ENCODE measurements at regions of chr7 and their contacts with region 1.

Region 1: GRCh38 chr7:41148521-41148951 is 554.4 kb downstream of the INHBA start:
- DNase-seq: peak; percentile 34 to 100
- H3K4me3 ChIP-seq: no peak overlapping the region; the same call in 1 of the 2 replicates
- H3K27ac ChIP-seq: peak overlapping the region; percentile 66
- H3K4me1 ChIP-seq: peaks cover 26% of the 10 kb centered on the region
- H3K27me3 ChIP-seq: no peaks in the 10 kb centered on the region
- CTCF ChIP-seq: no peak

Region 2: DNA sequence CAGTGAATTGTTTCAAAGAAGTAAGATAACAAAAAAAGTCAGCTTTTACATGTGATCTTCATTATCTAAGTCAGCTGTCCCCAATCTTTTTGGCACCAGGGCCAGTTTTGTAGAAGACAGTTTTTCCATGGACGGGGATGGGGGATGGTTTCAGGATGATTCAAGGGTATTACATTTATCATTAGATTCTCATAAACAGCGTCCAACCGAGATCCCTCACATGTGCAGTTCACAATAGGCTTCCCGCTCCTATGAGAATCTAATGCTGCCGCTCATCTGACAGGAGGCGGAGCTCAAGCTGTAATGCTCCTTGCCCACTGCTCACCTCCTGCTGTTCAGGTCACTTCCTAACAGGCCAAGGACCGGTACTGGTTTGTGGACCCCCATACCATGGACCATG is 406.3 kb before region 1 on chr7:
- CTCF ChIA-PET with region 1: no interaction called
- POLR2A ChIA-PET with region 1: no interaction called
- intact Hi-C with region 1: no loop called
- DNase-seq: no peak
- H3K4me3 ChIP-seq: no peak overlapping the region
- H3K27ac ChIP-seq: no peak overlapping the region
- H3K4me1 ChIP-seq: no peaks in the 10 kb centered on the region
- H3K27me3 ChIP-seq: no peaks in the 10 kb centered on the region
- CTCF ChIP-seq: no peak

Region 3: DNA sequence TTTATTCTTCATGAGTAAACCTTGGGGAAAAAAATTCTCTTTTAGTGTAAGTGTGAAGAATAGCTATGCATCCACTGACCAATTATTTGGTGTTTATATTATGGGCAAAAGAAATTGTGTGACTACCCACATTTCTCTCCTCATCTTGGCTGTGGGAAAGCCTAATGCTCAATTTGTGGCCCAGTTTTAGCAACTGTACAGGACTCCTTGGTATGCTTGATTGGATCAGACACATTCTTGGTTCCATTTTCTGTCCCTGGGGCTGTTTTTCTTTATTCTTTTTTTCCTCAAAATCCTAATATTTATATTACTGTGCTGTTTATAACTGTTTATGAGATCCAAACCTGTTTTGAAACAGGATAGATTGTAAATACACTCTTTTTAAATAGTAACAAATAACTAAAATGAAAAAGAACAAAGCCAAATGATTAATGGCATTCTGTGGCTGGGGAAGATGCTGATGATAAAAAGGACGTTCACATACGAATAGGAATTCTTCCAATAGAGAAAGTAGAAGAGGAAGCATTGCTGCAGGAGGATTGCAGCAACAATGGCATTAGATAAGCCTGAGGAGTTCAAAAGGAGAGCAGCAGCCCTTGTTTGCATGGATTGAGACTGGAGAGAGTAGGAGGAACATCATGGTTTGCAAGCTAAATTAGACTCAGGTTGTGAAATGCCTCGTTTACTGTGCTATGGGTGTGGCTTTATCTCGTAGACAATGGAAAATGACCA is 26.1 kb before region 1 on chr7:
- CTCF ChIA-PET with region 1: no interaction called
- POLR2A ChIA-PET with region 1: interaction called, 11 read pairs
- intact Hi-C with region 1: no loop called
- DNase-seq: peak; percentile 18 to 57
- H3K4me3 ChIP-seq: no peak overlapping the region
- H3K27ac ChIP-seq: no peak overlapping the region
- H3K4me1 ChIP-seq: peaks cover 9% of the 10 kb centered on the region
- H3K27me3 ChIP-seq: no peaks in the 10 kb centered on the region
- CTCF ChIP-seq: no peak

Region 4: GRCh38 chr7:41189866-41190265 is 41.3 kb after region 1 on chr7:
- CTCF ChIA-PET with region 1: no interaction called
- POLR2A ChIA-PET with region 1: no interaction called
- intact Hi-C with region 1: loop called (anchors 2 kb)
- DNase-seq: peak; percentile 61 to 99
- H3K4me3 ChIP-seq: no peak overlapping the region
- H3K27ac ChIP-seq: peak overlapping the region; percentile 93
- H3K4me1 ChIP-seq: peaks cover 46% of the 10 kb centered on the region
- H3K27me3 ChIP-seq: no peaks in the 10 kb centered on the region
- CTCF ChIP-seq: no peak